ENCODE measurements at regions of chr11 and their contacts with region 1.

Region 1: GRCh38 chr11:19903620-19904069 is 191.0 kb downstream of the NAV2 start:
- DNase-seq: peak; percentile 23 to 90
- H3K4me3 ChIP-seq: no peak overlapping the region
- H3K27ac ChIP-seq: no peak overlapping the region
- H3K4me1 ChIP-seq: peaks cover 0 to 8% (median 4%) of the 10 kb centered on the region in 4 experiments; a peak in 4 of 7 replicates
- H3K27me3 ChIP-seq: no peaks in the 10 kb centered on the region
- CTCF ChIP-seq: peak; percentile 54 to 87 (median 79)
- EP300 ChIP-seq: no peak
- POLR2A ChIP-seq: no peak
- RAD21 ChIP-seq: peak; percentile 93 to 95

Region 2: DNA sequence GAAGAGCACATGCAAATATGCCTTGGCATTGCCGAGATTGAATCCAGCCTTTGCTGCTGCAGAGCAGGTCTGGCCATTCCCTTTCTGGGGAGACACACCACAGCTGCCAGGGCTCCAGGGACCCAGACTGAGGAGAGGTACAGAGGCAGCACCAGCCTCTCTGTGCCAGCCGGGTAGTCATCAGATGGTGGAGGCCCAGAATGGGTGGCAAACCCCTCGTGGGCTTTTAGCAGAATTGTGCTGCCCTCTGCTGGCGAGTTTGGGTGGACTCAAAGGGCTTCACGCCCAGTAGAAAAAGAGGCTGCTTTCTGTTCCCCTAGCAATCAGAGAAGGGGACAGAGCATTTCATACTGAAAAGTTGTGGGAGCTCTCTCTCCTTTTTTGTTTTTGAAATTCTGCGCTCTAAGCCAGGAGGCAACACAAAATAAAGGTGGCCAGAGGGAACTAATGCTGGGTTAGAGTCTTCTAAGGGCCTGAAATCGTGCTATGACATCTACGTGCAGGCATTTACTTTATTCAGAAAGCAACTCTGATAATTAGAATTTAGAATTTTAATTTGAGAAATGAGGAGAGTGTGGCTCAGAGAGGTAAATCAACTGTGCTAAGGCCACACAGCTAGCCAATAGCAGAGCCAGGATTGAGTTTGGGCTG is 349.8 kb before region 1 on chr11:
- CTCF ChIA-PET with region 1: interaction called, 42 read pairs
- POLR2A ChIA-PET with region 1: no interaction called
- DNase-seq: peak; percentile 44 to 94
- H3K4me3 ChIP-seq: no peak overlapping the region
- H3K27ac ChIP-seq: no peak overlapping the region
- H3K4me1 ChIP-seq: peaks cover 0 to 8% (median 2%) of the 10 kb centered on the region in 4 experiments; a peak in 5 of 7 replicates
- H3K27me3 ChIP-seq: no peaks in the 10 kb centered on the region; a peak in 1 of 7 replicates
- CTCF ChIP-seq: peak; percentile 64 to 91 (median 85)
- EP300 ChIP-seq: no peak
- POLR2A ChIP-seq: no peak
- RAD21 ChIP-seq: peak; percentile 96 to 99

Region 3: DNA sequence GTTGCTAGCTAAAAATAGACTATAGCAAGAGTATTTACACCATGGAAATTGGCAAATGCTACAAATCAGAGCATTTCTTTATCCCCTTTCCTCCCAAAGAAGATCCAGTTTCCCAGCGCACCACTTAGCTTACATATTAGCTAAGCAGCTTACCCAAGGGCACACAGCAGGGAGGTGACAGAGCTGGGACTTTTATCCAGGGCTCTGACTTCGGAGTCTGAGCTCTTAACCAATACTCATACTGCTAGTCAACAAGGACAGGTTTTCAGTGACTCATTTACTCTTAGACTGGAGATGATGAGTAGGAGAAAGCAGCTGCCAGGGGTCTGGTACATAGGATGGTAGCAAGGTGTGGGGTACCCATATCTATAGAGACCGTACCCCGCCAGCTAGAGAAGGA is 152.6 kb before region 1 on chr11:
- CTCF ChIA-PET with region 1: interaction called, 18 read pairs
- POLR2A ChIA-PET with region 1: no interaction called
- DNase-seq: no peak
- H3K4me3 ChIP-seq: no peak overlapping the region
- H3K27ac ChIP-seq: no peak overlapping the region
- H3K4me1 ChIP-seq: peaks cover 0 to 13% (median 4%) of the 10 kb centered on the region in 4 experiments; a peak in 5 of 7 replicates
- H3K27me3 ChIP-seq: no peaks in the 10 kb centered on the region
- CTCF ChIP-seq: no peak
- EP300 ChIP-seq: no peak
- POLR2A ChIP-seq: no peak
- RAD21 ChIP-seq: no peak

Region 4: DNA sequence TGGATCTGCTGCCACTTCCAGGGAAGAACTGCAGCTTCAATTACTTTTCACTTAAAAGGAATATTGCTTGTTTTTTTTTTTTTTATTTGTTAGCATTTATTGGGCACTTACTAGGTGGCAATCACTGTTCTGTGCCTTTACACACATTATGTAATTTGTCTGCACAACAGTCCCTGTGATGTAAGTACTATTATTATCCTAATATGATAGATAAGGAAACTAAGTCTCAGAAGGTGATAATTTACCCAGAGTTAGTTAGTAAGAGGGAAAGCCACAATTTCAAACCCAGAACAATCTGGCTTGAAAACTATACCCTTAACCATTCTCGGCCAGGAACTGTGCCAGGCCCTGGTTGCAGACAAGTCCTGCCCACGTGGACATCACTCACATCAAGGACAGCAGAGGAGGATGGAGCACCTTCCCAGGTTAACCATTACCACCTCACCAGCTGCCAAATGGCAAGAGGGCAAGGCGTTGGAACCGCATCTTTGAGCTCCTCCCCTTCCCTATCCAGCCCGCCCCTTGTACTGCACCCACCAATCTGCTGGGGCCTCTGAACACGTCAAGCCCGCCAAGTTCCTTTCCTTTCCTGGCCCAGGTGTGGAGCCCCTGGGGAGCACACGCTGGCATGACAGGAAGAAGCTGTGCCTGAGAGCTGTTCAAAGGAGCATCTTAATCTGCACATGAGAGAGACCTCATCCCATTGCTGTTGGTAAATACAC is 112.7 kb before region 1 on chr11:
- CTCF ChIA-PET with region 1: interaction called, 10 read pairs
- POLR2A ChIA-PET with region 1: no interaction called
- DNase-seq: peak in 1 of 2 experiments; percentile 74
- H3K4me3 ChIP-seq: no peak overlapping the region
- H3K27ac ChIP-seq: no peak overlapping the region
- H3K4me1 ChIP-seq: peaks cover 5 to 28% (median 17%) of the 10 kb centered on the region in 4 experiments
- H3K27me3 ChIP-seq: no peaks in the 10 kb centered on the region
- CTCF ChIP-seq: no peak
- EP300 ChIP-seq: peak in 1 of 2 experiments; percentile 89; a peak in 1 of 3 replicates
- POLR2A ChIP-seq: no peak
- RAD21 ChIP-seq: 0 out of 4 replicates have a peak, but pooled peaks of 1 of the 2 experiments have one; percentile 6

Region 5: DNA sequence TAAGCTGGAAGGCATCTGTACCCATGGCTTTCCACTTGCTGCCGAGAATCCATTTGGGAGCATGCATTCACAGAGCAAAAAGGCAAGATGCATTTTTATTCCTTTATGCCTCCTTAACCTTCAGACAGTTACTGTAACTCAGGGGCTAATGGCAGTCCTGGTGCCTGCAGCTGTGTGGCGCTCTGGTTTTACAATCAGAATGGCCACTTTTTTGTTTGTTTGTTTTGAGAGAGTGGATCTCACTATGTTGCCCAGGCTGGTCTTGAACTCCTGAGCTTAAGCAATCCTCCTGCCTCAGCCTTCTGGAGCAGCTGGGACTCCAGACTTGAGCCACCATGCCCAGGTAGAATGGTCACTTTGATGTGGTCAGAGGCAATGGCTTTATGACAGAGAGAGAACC is 89.2 kb before region 1 on chr11:
- CTCF ChIA-PET with region 1: interaction called, 88 read pairs
- POLR2A ChIA-PET with region 1: interaction called, 7 read pairs
- DNase-seq: no peak
- H3K4me3 ChIP-seq: no peak overlapping the region
- H3K27ac ChIP-seq: no peak overlapping the region
- H3K4me1 ChIP-seq: peaks cover 28 to 50% (median 42%) of the 10 kb centered on the region in 4 experiments
- H3K27me3 ChIP-seq: no peaks in the 10 kb centered on the region
- CTCF ChIP-seq: peak; percentile 53 to 75 (median 69)
- EP300 ChIP-seq: no peak
- POLR2A ChIP-seq: no peak
- RAD21 ChIP-seq: peak; percentile 80 to 86

Region 6: DNA sequence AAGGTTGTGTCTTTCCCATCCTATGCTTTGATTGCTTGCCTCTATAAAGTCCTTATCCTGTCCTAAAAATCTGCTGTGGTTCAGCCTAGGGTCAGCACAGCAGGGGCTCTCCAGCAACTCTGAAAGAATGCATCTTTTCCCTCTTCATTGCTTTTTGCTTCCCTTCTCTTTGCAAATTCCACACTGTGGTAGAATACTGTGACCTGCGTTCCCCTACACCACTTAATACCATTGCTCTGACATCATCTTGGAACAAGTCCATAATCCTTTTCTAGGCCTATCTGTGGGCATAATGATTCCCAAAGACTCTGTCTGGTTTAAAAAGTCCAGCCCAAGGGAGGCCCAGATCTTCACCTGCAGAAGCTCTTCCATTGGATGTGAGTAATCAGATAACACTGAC is 13.3 kb before region 1 on chr11:
- CTCF ChIA-PET with region 1: interaction called, 26 read pairs
- POLR2A ChIA-PET with region 1: no interaction called
- DNase-seq: no peak
- H3K4me3 ChIP-seq: no peak overlapping the region
- H3K27ac ChIP-seq: no peak overlapping the region
- H3K4me1 ChIP-seq: peaks cover 1 to 8% (median 6%) of the 10 kb centered on the region in 4 experiments; a peak in 5 of 7 replicates
- H3K27me3 ChIP-seq: no peaks in the 10 kb centered on the region
- CTCF ChIP-seq: no peak
- EP300 ChIP-seq: no peak
- POLR2A ChIP-seq: no peak
- RAD21 ChIP-seq: no peak

Region 7: GRCh38 chr11:20110908-20111669 is 207.4 kb after region 1 on chr11:
- CTCF ChIA-PET with region 1: interaction called, 12 read pairs
- POLR2A ChIA-PET with region 1: no interaction called
- DNase-seq: peak in 1 of 2 experiments; percentile 76
- H3K4me3 ChIP-seq: no peak overlapping the region
- H3K27ac ChIP-seq: no peak overlapping the region; the same call in 1 of the 2 replicates
- H3K4me1 ChIP-seq: no peaks in the 10 kb centered on the region
- H3K27me3 ChIP-seq: no peaks in the 10 kb centered on the region
- CTCF ChIP-seq: peak; percentile 85 to 99 (median 94)
- EP300 ChIP-seq: no peak
- POLR2A ChIP-seq: no peak
- RAD21 ChIP-seq: peak; percentile 83 to 88